Heart right ventricle (tissue), 16 donors: ENCODE measurements at regions of chr17 and their contacts with region 1.

Region 1: GRCh38 chr17:68909066-68909465 is 46.1 kb downstream of the ABCA8 start:
- DNase-seq: peak in 1 of 2 donors; percentile 55
- ATAC-seq: peak; percentile 56 to 87 (median 73)
- H3K4me3 ChIP-seq: no peak overlapping the region
- H3K27ac ChIP-seq: peak overlapping the region; percentile 7 to 82 (median 56)
- H3K4me1 ChIP-seq: peaks cover 0 to 33% (median 12%) of the 10 kb centered on the region in 9 donors
- H3K27me3 ChIP-seq: no peaks in the 10 kb centered on the region
- CTCF ChIP-seq: no peak

Region 2: GRCh38 chr17:68782789-68783188 is 126.3 kb before region 1 on chr17:
- intact Hi-C with region 1: loop called in 3 of 10 experiments (anchors 5 to 10 kb)
- DNase-seq: no peak
- ATAC-seq: peak in 3 of 8 donors; percentile 27 to 85 (median 72)
- H3K4me3 ChIP-seq: no peak overlapping the region
- H3K27ac ChIP-seq: peak overlapping the region in 1 of 10 donors; percentile 41
- H3K4me1 ChIP-seq: peaks cover 0 to 25% (median 8%) of the 10 kb centered on the region in 9 donors
- H3K27me3 ChIP-seq: no peaks in the 10 kb centered on the region
- CTCF ChIP-seq: no peak

Region 3: DNA sequence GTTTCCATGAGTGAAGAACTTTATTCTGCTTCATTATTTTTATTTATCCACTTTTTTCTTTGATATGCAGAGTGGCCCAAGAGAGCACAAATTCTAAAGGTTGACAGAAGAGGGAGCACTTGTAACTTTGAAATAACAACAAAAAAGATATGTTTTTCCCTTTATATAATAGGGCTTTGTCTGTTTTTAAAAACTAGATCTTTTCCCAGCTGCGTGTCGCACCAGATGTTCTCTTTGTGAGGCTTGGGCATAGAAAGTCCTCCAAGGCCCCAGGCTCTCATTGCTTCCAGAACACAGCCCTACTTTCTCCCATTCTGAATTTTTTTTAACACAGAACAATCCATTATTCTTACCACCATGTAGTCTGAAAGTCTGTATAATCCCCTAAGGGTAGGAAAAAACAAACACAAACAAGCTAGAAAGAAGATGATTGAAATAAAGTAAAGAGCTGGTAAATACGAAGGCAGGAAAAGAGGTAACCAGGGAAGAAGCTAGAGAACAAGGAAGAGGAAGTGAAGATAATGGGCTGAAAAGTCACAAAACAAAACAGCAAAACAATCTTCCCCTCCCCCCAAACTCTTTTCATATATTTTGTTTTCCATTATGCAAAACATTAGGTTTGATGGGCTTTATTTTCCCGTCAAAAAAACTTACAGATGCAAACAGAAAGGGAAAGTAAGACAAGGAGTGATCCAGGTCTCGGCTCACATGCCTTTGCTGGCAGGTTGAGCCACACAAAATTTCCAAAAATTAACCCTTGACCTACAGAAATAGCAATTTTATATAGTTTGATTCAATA is 114.2 kb before region 1 on chr17:
- intact Hi-C with region 1: loop called in 1 of 10 experiments (anchors 5 kb)
- DNase-seq: peak in 1 of 2 donors; percentile 53
- ATAC-seq: peak; percentile 45 to 84 (median 74)
- H3K4me3 ChIP-seq: peak overlapping the region in 1 of 10 donors; percentile 12
- H3K27ac ChIP-seq: peak overlapping the region; percentile 53 to 89 (median 74)
- H3K4me1 ChIP-seq: peaks cover 0 to 55% (median 33%) of the 10 kb centered on the region in 9 donors
- H3K27me3 ChIP-seq: peaks cover 0 to 6% (median 0%) of the 10 kb centered on the region in 7 donors
- CTCF ChIP-seq: peak in 7 of 9 donors; percentile 34 to 52 (median 44)

Region 4: DNA sequence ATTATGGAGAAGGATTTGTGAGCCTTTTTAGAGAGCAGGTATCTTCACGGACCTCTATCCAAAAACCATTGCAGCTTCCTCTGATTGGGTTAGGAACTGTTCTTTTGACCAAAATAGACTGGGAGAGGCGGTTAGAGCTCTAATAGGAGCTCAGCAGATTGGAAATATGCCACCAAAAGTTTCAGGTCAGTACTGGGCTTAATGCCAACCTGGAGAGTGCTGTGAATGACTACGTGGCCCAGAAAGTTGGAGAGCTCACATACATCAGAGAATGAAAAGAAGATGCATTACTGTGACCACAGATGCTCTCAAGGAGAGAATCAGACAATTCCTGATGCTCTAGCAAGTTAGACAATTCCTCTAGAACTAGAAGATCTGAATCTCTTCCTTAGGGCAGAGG is 40.4 kb before region 1 on chr17:
- intact Hi-C with region 1: loop called in 1 of 10 experiments (anchors 5 kb)
- DNase-seq: no peak
- ATAC-seq: peak in 6 of 8 donors; percentile 16 to 79 (median 54)
- H3K4me3 ChIP-seq: no peak overlapping the region
- H3K27ac ChIP-seq: no peak overlapping the region
- H3K4me1 ChIP-seq: peaks cover 0 to 15% (median 0%) of the 10 kb centered on the region in 9 donors
- H3K27me3 ChIP-seq: no peaks in the 10 kb centered on the region
- CTCF ChIP-seq: no peak